GM13976 (cell line): ENCODE measurements at regions of chr10 and their contacts with region 1.

Region 1: DNA sequence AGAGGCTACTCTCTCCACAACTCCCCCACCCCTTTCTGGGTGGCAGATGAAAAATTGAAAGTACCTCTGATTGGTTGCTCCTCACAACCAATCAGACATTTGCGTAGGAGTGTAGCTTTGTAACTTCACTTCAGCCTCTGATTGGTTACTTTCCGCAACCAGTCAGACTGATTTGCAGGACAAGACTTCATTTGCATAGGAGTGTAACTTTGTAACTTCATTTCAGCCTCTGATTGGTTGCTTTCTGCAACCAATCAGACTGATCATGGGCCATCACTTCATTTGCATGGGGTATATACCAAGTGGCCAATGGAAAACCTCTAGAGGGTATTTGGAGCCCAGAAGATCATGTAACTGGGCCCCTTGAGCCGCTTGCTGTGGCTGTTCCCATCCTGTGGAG is 25.6 kb downstream of the CDNF start:
- DNase-seq: no peak
- CTCF ChIP-seq: no peak

Region 2: GRCh38 chr10:14491806-14492205 is 320.5 kb before region 1 on chr10:
- in situ Hi-C with region 1: loop called (anchors 10 kb)
- DNase-seq: no peak
- CTCF ChIP-seq: no peak

Region 3: GRCh38 chr10:14936584-14936983 is 124.3 kb after region 1 on chr10:
- in situ Hi-C with region 1: no loop called
- DNase-seq: no peak
- CTCF ChIP-seq: no peak